ENCODE measurements at regions of chr6 and their contacts with region 1.

Region 1: DNA sequence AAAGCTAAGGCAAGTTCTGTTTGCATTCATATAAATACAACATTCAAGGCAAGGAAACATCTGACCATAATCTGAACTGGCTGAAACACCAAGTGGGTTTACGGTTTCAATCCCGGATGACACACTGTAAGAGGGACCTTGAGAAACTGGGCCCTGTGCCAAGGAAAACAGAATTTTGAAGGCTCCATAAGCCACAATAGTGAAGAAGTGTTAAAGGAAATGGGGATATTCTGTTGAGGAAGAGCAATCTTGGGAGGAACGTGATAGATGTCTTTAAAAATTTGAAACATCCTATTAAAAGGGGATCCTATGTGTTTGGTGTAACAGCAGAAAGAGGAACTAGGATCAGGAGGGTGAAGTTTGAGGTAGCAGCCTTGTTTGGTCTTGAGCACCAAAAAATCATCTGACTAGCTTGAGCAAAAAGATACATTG is 82.4 kb upstream of the TAB2 start:
- DNase-seq: peak; percentile 80
- H3K4me3 ChIP-seq: no peak overlapping the region
- H3K27ac ChIP-seq: peak overlapping the region; percentile 77
- H3K4me1 ChIP-seq: peaks cover 32% of the 10 kb centered on the region
- H3K27me3 ChIP-seq: no peaks in the 10 kb centered on the region
- CTCF ChIP-seq: no peak

Region 2: GRCh38 chr6:148846778-148847761 is 388.1 kb before region 1 on chr6:
- CTCF ChIA-PET with region 1: no interaction called
- dilution Hi-C with region 1: no loop called
- in situ Hi-C with region 1: no loop called
- intact Hi-C with region 1: no loop called
- DNase-seq: no peak
- H3K4me3 ChIP-seq: no peak overlapping the region
- H3K27ac ChIP-seq: no peak overlapping the region
- H3K4me1 ChIP-seq: no peaks in the 10 kb centered on the region
- H3K27me3 ChIP-seq: no peaks in the 10 kb centered on the region
- CTCF ChIP-seq: no peak

Region 3: DNA sequence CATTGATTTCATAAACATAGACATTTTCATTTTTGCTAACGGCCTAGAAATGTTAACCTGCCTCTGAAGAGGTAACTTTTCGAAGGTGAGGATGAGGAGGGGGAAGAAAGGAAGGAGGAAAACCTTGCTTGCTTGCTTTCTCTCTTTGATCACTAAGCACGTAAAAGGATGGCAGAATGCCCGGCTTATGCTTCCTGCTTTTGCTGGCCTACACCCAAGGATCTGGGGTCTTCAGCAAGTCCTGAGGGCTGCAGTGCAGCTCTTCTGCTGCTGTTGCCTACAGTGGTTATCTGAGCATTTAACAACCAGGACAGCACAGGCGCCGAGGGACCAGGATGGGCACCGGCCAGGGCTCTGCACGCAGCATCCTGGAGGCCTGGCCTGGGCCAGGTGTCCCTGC is 68.4 kb before region 1 on chr6:
- CTCF ChIA-PET with region 1: no interaction called
- dilution Hi-C with region 1: no loop called
- in situ Hi-C with region 1: no loop called
- intact Hi-C with region 1: no loop called
- DNase-seq: no peak
- H3K4me3 ChIP-seq: no peak overlapping the region
- H3K27ac ChIP-seq: no peak overlapping the region
- H3K4me1 ChIP-seq: no peaks in the 10 kb centered on the region
- H3K27me3 ChIP-seq: no peaks in the 10 kb centered on the region
- CTCF ChIP-seq: no peak

Region 4: DNA sequence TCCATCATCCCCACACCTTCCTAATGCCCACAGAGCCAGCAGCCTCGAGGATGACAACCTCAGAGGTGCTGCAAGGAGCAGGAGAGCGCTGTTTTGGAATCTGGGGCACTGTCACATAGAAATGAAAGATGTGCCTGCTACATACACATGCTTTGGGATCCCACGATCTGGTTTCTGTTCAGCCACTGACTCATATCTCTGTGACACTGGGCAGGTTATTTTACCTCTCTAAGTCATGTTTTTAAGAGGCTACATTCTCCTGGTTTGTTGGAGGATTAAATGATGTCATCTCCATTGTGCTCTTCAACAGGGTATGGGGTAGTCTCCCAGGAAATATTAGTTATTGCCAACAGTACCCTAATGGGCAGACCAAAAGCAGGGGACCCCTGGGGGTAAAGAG is 49.8 kb after region 1 on chr6:
- CTCF ChIA-PET with region 1: no interaction called
- dilution Hi-C with region 1: loop called (anchors 5 kb)
- in situ Hi-C with region 1: no loop called
- intact Hi-C with region 1: no loop called
- DNase-seq: peak; percentile 66
- H3K4me3 ChIP-seq: no peak overlapping the region
- H3K27ac ChIP-seq: no peak overlapping the region
- H3K4me1 ChIP-seq: peaks cover 9% of the 10 kb centered on the region
- H3K27me3 ChIP-seq: no peaks in the 10 kb centered on the region
- CTCF ChIP-seq: no peak

Region 5: GRCh38 chr6:149335924-149336608 is 100.9 kb after region 1 on chr6:
- CTCF ChIA-PET with region 1: no interaction called
- dilution Hi-C with region 1: loop called (anchors 5 kb)
- in situ Hi-C with region 1: no loop called
- intact Hi-C with region 1: no loop called
- DNase-seq: peak; percentile 78
- H3K4me3 ChIP-seq: peak overlapping the region in 2 of 3 experiments; percentile 7 to 35
- H3K27ac ChIP-seq: peak overlapping the region; percentile 83
- H3K4me1 ChIP-seq: peaks cover 51% of the 10 kb centered on the region
- H3K27me3 ChIP-seq: no peaks in the 10 kb centered on the region
- CTCF ChIP-seq: no peak

Measured in mammary epithelial cell (primary cell).